Ascending aorta (tissue), 2 donors: ENCODE measurements at regions of chr21 and their contacts with region 1.

Region 1: DNA sequence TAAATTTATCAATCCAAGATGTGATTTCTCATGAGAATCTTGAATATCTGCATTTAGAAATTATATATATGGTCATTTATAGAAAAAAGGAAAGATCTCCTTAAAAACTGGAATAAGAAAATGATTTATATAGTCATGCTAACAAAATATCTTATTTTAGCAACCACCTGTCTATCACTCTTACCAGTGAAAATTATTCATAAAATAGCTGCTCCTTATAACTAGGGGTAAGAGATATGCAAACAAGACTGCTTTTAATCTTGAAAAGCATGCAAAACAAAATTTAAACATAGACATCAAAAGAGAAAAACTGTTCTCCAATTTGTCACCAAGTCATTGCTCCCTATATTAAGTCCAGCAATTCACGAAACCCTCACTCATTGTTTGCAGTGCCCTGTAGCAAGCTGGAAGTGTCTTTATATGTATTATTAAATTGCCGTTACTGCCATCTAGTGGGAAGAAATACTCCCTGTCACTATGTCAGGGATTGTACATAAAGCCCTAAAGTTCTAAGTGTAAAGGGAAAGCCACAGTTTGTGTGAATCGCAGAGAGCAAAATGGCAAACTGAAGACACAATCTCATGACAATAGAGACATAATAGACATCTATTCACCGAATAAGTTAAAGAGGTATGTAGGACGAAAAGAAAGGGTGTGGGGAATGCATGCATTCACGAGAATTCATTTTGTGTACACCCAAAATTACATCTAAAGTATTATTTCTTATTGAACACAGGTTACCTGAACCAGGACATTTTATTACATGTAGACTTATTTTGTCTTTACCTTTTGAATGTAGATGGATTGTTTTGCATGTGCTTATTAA is 600.5 kb downstream of the USP25 start:
- DNase-seq: no peak
- H3K4me3 ChIP-seq: no peak overlapping the region
- H3K27ac ChIP-seq: no peak overlapping the region
- H3K4me1 ChIP-seq: no peaks in the 10 kb centered on the region
- H3K27me3 ChIP-seq: no peaks in the 10 kb centered on the region
- CTCF ChIP-seq: peak; percentile 38 to 68 (median 66)

Region 2: GRCh38 chr21:15894596-15894995 is 435.7 kb before region 1 on chr21:
- intact Hi-C with region 1: loop called (anchors 5 kb)
- DNase-seq: no peak
- H3K4me3 ChIP-seq: no peak overlapping the region
- H3K27ac ChIP-seq: no peak overlapping the region
- H3K4me1 ChIP-seq: peaks cover 0 to 6% of the 10 kb centered on the region in 2 donors
- H3K27me3 ChIP-seq: no peaks in the 10 kb centered on the region
- CTCF ChIP-seq: peak in 2 of 3 experiments; percentile 22 to 42

Region 3: GRCh38 chr21:15928196-15928595 is 402.1 kb before region 1 on chr21:
- intact Hi-C with region 1: no loop called
- DNase-seq: no peak
- H3K4me3 ChIP-seq: no peak overlapping the region
- H3K27ac ChIP-seq: no peak overlapping the region
- H3K4me1 ChIP-seq: no peaks in the 10 kb centered on the region
- H3K27me3 ChIP-seq: no peaks in the 10 kb centered on the region
- CTCF ChIP-seq: no peak

Region 4: DNA sequence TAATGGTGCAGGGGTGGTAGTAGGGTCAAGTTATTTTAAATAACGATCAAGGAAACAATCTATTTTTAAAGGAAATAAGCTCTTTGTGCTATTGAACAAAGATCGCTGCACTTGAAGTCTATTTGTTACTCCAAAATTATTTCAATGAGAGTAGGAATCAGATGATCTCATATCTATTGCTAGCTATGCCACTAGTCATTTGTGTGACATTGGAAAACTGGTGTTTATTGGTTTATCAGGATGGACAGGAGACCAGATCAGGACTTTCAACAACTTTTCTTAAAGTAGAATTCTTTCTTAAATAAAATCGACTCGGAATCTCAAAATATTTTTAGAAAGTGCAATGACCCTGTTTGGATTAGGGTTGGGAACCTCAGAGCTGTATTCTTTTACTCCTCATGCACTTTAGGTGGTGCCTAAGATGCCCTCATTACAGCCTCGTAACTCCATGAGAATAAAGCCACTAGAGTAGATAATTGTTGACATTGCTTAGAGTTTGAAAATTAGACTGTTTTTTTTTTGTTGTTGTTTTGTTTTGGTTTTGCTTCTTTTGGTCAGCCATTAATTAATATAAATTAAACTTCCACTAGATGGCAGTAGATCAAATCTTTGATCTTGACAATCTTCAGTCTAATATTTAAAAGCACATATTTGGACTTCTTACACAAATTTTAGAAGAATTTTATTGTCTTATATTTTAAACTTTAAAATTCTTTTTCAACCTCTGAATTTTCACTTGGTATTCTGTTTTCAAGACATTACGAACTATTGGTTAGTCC is 248.1 kb before region 1 on chr21:
- intact Hi-C with region 1: loop called (anchors 1 kb)
- DNase-seq: no peak
- H3K4me3 ChIP-seq: peak overlapping the region in 1 of 2 donors; percentile 24
- H3K27ac ChIP-seq: no peak overlapping the region
- H3K4me1 ChIP-seq: no peaks in the 10 kb centered on the region
- H3K27me3 ChIP-seq: no peaks in the 10 kb centered on the region
- CTCF ChIP-seq: peak; percentile 12 to 44 (median 14)